ENCODE measurements at regions of chr5 and their contacts with region 1.

Region 1: GRCh38 chr5:168486136-168486879 is at the start of gene RARS1:
- DNase-seq: peak; percentile 86 to 94
- H3K4me3 ChIP-seq: peak within 1 kb of the TSS; percentile 83
- H3K27ac ChIP-seq: peak within 1 kb of the TSS; percentile 35; the same call in 1 of the 2 replicates
- H3K4me1 ChIP-seq: peaks cover 11% of the 10 kb centered on the region
- H3K27me3 ChIP-seq: no peaks in the 10 kb centered on the region
- CTCF ChIP-seq: peak; percentile 88
- total RNA-seq, gene RARS1: 101 and 125 TPM in 2 replicates

Region 2: GRCh38 chr5:168449153-168449552 is 37.2 kb before region 1 on chr5:
- CTCF ChIA-PET with region 1: no interaction called
- POLR2A ChIA-PET with region 1: no interaction called
- intact Hi-C with region 1: loop called (anchors 1 kb)
- DNase-seq: peak; percentile 50 to 59
- H3K4me3 ChIP-seq: no peak overlapping the region
- H3K27ac ChIP-seq: no peak overlapping the region
- H3K4me1 ChIP-seq: peaks cover 9% of the 10 kb centered on the region; the same call in 1 of the 2 replicates
- H3K27me3 ChIP-seq: no peaks in the 10 kb centered on the region
- CTCF ChIP-seq: no peak

Region 3: GRCh38 chr5:168579488-168580226 is 93.3 kb after region 1 on chr5:
- CTCF ChIA-PET with region 1: no interaction called
- POLR2A ChIA-PET with region 1: no interaction called
- intact Hi-C with region 1: loop called (anchors 10 kb)
- DNase-seq: peak; percentile 97 to 99
- H3K4me3 ChIP-seq: peak overlapping the region; percentile 99
- H3K27ac ChIP-seq: peak overlapping the region; percentile 80
- H3K4me1 ChIP-seq: peaks cover 26% of the 10 kb centered on the region
- H3K27me3 ChIP-seq: no peaks in the 10 kb centered on the region
- CTCF ChIP-seq: no peak

Region 4: GRCh38 chr5:168679515-168679920 is 193.2 kb after region 1 on chr5:
- CTCF ChIA-PET with region 1: no interaction called
- POLR2A ChIA-PET with region 1: no interaction called
- intact Hi-C with region 1: loop called (anchors 10 kb)
- DNase-seq: peak in 1 of 2 experiments; percentile 63
- H3K4me3 ChIP-seq: no peak overlapping the region
- H3K27ac ChIP-seq: no peak overlapping the region
- H3K4me1 ChIP-seq: no peaks in the 10 kb centered on the region
- H3K27me3 ChIP-seq: peaks cover 22% of the 10 kb centered on the region; the same call in 1 of the 2 replicates
- CTCF ChIP-seq: peak; percentile 95

Region 5: GRCh38 chr5:170046241-170046640 is 1559.9 kb after region 1 on chr5:
- CTCF ChIA-PET with region 1: no interaction called
- POLR2A ChIA-PET with region 1: interaction called, 10 read pairs
- intact Hi-C with region 1: no loop called
- DNase-seq: no peak
- H3K4me3 ChIP-seq: no peak overlapping the region
- H3K27ac ChIP-seq: no peak overlapping the region
- H3K4me1 ChIP-seq: no peaks in the 10 kb centered on the region
- H3K27me3 ChIP-seq: no peaks in the 10 kb centered on the region
- CTCF ChIP-seq: no peak